CD4-positive, alpha-beta memory T cell (primary cell): ENCODE measurements at regions of chr18 and their contacts with region 1.

Region 1: DNA sequence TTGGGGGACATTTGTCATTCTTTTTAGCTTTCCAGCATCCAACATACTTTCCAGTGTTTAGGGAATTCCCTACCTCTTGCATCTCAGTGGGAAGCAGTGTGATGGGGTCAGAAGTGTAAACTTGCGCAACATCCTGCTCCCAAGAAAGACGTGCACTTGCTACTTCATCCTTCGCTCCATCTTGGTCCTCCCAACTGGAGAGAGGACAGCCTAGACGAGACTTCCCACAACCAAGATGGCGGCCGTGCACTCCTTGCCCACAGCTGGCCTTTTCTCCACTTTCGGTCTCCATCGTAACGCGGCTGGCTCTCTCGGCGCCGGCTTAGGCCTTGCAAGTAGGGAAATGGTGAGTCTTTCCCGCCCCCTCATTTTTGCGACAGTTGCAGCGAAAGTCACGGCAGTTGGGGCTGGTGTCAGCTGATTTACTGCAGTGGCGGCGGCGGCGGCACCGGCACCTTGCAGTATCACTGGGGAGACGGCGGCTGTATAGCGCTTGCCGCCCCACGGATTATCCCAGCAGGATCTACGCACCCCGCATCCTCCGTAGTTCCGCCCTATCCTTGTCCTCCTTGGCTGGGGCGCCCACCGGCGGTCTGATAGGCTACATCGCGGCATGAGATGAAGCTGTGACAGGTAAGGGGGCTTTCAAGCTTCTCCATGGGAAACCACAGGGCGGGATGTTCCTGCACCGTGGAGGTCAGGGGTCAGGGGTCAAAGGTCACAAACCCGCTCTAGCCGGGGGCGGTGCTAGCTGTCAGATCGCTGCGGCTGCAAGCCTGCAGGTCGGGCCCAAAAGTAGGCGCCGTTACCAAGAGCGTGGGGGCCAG is at the start of gene WDR7:
- DNase-seq: peak; percentile 93 to 98 (median 96)
- H3K4me3 ChIP-seq: peak within 1 kb of the TSS; percentile 73 to 81
- H3K4me3 Mint-ChIP-seq: peak within 1 kb of the TSS; percentile 90 to 97 (median 94)
- H3K27ac ChIP-seq: peak within 1 kb of the TSS; percentile 84
- H3K27ac Mint-ChIP-seq: peak within 1 kb of the TSS; percentile 92 to 96 (median 96)
- H3K4me1 ChIP-seq: peaks cover 52% of the 10 kb centered on the region
- H3K4me1 Mint-ChIP-seq: peaks cover 32 to 67% (median 51%) of the 10 kb centered on the region in 4 donors
- H3K27me3 ChIP-seq: no peaks in the 10 kb centered on the region
- H3K27me3 Mint-ChIP-seq: no peaks in the 10 kb centered on the region
- total RNA-seq, gene WDR7: 44.3 to 50.8 TPM

Region 2: DNA sequence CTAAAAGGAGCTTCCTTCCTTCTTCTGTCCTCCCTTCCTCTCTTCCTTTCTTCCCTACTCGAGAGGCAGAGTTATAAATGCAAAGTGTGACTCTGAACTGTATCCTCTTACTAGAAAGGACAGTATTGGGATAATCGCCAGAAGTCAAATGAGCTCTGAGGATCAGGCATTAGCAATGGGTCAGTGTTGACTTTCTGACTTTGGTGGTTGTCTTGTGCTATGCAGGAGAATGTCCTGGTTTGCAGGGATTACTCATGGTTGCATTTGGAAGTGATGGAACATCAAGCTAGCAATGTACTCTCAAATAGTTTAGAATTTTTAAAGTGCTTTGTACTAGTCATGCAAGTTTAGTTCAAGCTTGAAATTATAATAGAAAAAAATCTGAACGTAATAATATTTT is 128.3 kb before region 1 on chr18:
- CTCF ChIA-PET with region 1: no interaction called
- POLR2A ChIA-PET with region 1: no interaction called
- intact Hi-C with region 1: no loop called
- DNase-seq: no peak
- H3K4me3 ChIP-seq: no peak overlapping the region
- H3K4me3 Mint-ChIP-seq: no peak overlapping the region
- H3K27ac ChIP-seq: no peak overlapping the region
- H3K27ac Mint-ChIP-seq: no peak overlapping the region
- H3K4me1 ChIP-seq: no peaks in the 10 kb centered on the region
- H3K4me1 Mint-ChIP-seq: no peaks in the 10 kb centered on the region
- H3K27me3 ChIP-seq: no peaks in the 10 kb centered on the region
- H3K27me3 Mint-ChIP-seq: peaks cover 1 to 7% of the 10 kb centered on the region in 2 donors

Region 3: GRCh38 chr18:56593906-56594305 is 57.3 kb before region 1 on chr18:
- CTCF ChIA-PET with region 1: no interaction called
- POLR2A ChIA-PET with region 1: no interaction called
- intact Hi-C with region 1: no loop called
- DNase-seq: no peak
- H3K4me3 ChIP-seq: no peak overlapping the region
- H3K4me3 Mint-ChIP-seq: no peak overlapping the region
- H3K27ac ChIP-seq: no peak overlapping the region
- H3K27ac Mint-ChIP-seq: no peak overlapping the region
- H3K4me1 ChIP-seq: no peaks in the 10 kb centered on the region
- H3K4me1 Mint-ChIP-seq: no peaks in the 10 kb centered on the region
- H3K27me3 ChIP-seq: no peaks in the 10 kb centered on the region
- H3K27me3 Mint-ChIP-seq: no peaks in the 10 kb centered on the region

Region 4: DNA sequence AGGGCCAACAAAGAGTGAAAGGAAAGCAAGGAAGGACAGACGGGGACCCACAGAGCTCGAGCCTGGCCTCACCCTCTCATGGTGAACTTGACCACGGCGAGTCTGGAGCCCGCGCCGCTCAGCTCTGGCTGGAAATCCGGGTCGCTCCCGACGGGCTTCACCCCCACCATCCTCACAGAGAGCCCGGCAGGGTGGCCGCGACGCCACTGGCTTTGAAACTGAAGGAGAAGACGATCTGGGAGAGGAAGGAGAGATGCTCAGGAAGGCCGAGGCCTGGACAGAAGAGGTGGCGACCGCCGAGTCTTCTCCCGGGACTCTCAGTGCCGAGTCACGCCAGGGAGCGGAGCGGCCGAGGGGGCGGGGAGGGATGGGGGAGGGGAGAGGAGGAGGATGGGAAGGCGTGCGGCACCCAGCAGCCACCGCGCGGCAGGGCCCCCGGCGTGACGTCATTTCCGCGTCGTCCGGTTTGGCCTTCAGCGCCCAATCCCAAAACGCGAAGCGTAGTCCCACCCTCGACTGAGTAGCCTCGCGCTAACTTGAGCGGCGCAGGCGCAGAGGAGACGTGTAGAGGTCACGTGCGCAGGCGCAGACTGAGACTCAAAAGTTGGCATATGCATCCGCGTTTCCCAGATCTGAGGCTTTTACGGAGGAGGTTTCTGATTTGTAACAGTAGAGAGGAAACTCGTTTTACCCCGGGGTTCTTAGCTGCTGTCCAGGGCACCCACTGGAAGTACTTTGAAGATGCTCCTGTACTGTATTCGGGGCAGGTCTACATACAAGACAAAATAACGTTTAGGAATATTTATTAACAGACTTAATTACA is 12.7 kb before region 1 on chr18 and contains the start of gene TXNL1:
- CTCF ChIA-PET with region 1: interaction called, 21 read pairs
- POLR2A ChIA-PET with region 1: interaction called, 47 read pairs
- intact Hi-C with region 1: loop called (anchors 1 kb)
- DNase-seq: peak; percentile 97 to 99 (median 98)
- H3K4me3 ChIP-seq: peak within 1 kb of the TSS; percentile 64 to 93
- H3K4me3 Mint-ChIP-seq: peak within 1 kb of the TSS; percentile 95 to 100 (median 99)
- H3K27ac ChIP-seq: peak within 1 kb of the TSS; percentile 80
- H3K27ac Mint-ChIP-seq: peak within 1 kb of the TSS; percentile 89 to 99 (median 98)
- H3K4me1 ChIP-seq: peaks cover 42% of the 10 kb centered on the region
- H3K4me1 Mint-ChIP-seq: peaks cover 37 to 53% (median 45%) of the 10 kb centered on the region in 4 donors
- H3K27me3 ChIP-seq: no peaks in the 10 kb centered on the region
- H3K27me3 Mint-ChIP-seq: no peaks in the 10 kb centered on the region
- total RNA-seq, gene TXNL1: 41.4 to 42.3 TPM

Region 5: GRCh38 chr18:56661360-56662062 is 10.4 kb after region 1 on chr18:
- CTCF ChIA-PET with region 1: interaction called, 8 read pairs
- POLR2A ChIA-PET with region 1: interaction called, 16 read pairs
- intact Hi-C with region 1: no loop called
- DNase-seq: no peak
- H3K4me3 ChIP-seq: no peak overlapping the region
- H3K4me3 Mint-ChIP-seq: no peak overlapping the region
- H3K27ac ChIP-seq: no peak overlapping the region
- H3K27ac Mint-ChIP-seq: peak overlapping the region in 1 of 7 donors; percentile 42
- H3K4me1 ChIP-seq: no peaks in the 10 kb centered on the region
- H3K4me1 Mint-ChIP-seq: peaks cover 28 to 54% (median 36%) of the 10 kb centered on the region in 4 donors
- H3K27me3 ChIP-seq: no peaks in the 10 kb centered on the region
- H3K27me3 Mint-ChIP-seq: no peaks in the 10 kb centered on the region

Region 6: DNA sequence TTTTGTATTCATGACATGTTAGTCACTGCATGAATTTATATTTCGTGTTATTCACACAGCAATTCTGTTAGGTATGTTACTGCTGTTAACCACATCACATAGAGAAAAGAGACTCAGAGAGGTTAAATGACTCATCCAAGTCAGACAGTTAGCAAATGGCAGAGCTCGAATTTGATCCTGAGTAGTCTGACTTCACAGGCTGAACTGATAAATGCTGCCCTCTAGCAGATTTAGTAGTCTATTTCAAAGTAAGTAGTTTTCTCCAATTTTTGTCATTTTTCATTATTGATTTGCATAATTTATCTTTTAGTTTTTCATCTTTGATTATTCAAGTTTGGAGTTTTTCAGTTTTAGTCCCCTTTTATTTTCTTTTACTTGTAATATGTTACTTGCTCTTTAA is 58.3 kb after region 1 on chr18:
- CTCF ChIA-PET with region 1: interaction called, 7 read pairs
- POLR2A ChIA-PET with region 1: interaction called, 4 read pairs
- intact Hi-C with region 1: loop called (anchors 1 kb)
- DNase-seq: peak; percentile 41 to 64 (median 54)
- H3K4me3 ChIP-seq: no peak overlapping the region
- H3K4me3 Mint-ChIP-seq: no peak overlapping the region
- H3K27ac ChIP-seq: no peak overlapping the region
- H3K27ac Mint-ChIP-seq: no peak overlapping the region
- H3K4me1 ChIP-seq: peaks cover 5% of the 10 kb centered on the region
- H3K4me1 Mint-ChIP-seq: peaks cover 0 to 4% (median 2%) of the 10 kb centered on the region in 4 donors
- H3K27me3 ChIP-seq: no peaks in the 10 kb centered on the region
- H3K27me3 Mint-ChIP-seq: no peaks in the 10 kb centered on the region

Region 7: GRCh38 chr18:57621246-57621604 is 970.1 kb after region 1 on chr18:
- CTCF ChIA-PET with region 1: no interaction called
- POLR2A ChIA-PET with region 1: interaction called, 9 read pairs
- intact Hi-C with region 1: loop called (anchors 1 kb)
- DNase-seq: no peak
- H3K4me3 ChIP-seq: peak overlapping the region; percentile 85 to 86
- H3K4me3 Mint-ChIP-seq: peak overlapping the region; percentile 94 to 99 (median 96)
- H3K27ac ChIP-seq: peak overlapping the region; percentile 88
- H3K27ac Mint-ChIP-seq: peak overlapping the region; percentile 96 to 99 (median 98)
- H3K4me1 ChIP-seq: peaks cover 31% of the 10 kb centered on the region
- H3K4me1 Mint-ChIP-seq: peaks cover 17 to 41% (median 29%) of the 10 kb centered on the region in 4 donors
- H3K27me3 ChIP-seq: no peaks in the 10 kb centered on the region
- H3K27me3 Mint-ChIP-seq: no peaks in the 10 kb centered on the region